ENCODE measurements at regions of chr16 and their contacts with region 1.

Region 1: DNA sequence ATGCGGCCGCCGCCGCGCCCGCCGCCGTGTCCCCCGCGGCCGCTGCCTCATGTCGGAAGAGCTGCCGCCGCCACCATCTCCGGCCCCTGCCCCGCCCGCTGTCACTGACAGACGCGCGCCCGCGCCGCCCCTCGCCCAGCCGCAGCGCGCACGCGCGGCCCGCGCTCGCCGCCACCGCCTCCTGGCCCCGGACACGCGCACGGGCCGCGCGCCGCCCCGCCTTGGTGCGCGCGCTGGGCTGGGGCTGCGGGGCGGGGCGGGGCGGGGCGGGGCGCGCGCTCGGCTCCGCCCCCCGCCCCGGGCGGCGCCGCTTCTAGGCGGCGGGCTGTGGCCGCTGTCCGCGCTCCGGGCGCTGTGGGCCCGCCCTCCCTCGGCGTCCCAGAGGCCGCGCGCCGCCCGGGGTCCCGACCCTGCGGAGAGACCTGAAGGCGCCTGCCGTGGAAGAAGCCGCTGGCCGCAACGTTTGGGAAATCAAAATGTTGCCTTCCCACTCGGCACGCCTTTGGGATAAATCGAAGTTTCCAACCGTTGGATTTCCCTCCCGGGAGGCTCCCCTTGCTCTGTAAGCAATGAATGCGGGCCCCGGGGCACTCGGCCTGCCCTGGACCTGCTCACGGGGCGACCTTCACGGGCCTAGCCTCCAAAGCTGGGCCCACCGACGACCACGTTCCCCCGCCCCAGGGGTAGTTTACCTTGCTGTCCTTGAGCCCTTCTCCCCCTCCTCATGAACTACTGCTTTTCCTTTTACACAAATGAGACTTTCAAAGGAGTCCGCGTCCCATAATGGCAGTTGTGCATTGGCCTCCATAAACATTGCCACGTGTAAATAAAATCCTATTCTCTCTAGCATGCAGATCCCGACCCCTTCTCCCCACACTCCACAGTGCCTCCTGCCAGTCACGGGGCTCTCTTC is at the start of gene ADCY9:
- DNase-seq: peak; percentile 77
- H3K4me3 ChIP-seq: peak within 1 kb of the TSS; percentile 66
- H3K27ac ChIP-seq: no peak within 1 kb of the TSS
- H3K4me1 ChIP-seq: peaks cover 7% of the 10 kb centered on the region
- CTCF ChIP-seq: no peak
- total RNA-seq, gene ADCY9: 0.08 and 0.22 TPM in 2 replicates

Region 2: GRCh38 chr16:4046221-4046620 is 70.4 kb before region 1 on chr16:
- CTCF ChIA-PET with region 1: no interaction called
- POLR2A ChIA-PET with region 1: interaction called, 12 read pairs
- intact Hi-C with region 1: no loop called
- DNase-seq: no peak
- H3K4me3 ChIP-seq: no peak overlapping the region
- H3K27ac ChIP-seq: no peak overlapping the region
- H3K4me1 ChIP-seq: no peaks in the 10 kb centered on the region
- CTCF ChIP-seq: no peak

Region 3: GRCh38 chr16:4160658-4161430 is 44.3 kb after region 1 on chr16:
- CTCF ChIA-PET with region 1: no interaction called
- POLR2A ChIA-PET with region 1: no interaction called
- intact Hi-C with region 1: no loop called
- DNase-seq: no peak
- H3K4me3 ChIP-seq: no peak overlapping the region
- H3K27ac ChIP-seq: no peak overlapping the region
- H3K4me1 ChIP-seq: no peaks in the 10 kb centered on the region
- CTCF ChIP-seq: no peak

Region 4: DNA sequence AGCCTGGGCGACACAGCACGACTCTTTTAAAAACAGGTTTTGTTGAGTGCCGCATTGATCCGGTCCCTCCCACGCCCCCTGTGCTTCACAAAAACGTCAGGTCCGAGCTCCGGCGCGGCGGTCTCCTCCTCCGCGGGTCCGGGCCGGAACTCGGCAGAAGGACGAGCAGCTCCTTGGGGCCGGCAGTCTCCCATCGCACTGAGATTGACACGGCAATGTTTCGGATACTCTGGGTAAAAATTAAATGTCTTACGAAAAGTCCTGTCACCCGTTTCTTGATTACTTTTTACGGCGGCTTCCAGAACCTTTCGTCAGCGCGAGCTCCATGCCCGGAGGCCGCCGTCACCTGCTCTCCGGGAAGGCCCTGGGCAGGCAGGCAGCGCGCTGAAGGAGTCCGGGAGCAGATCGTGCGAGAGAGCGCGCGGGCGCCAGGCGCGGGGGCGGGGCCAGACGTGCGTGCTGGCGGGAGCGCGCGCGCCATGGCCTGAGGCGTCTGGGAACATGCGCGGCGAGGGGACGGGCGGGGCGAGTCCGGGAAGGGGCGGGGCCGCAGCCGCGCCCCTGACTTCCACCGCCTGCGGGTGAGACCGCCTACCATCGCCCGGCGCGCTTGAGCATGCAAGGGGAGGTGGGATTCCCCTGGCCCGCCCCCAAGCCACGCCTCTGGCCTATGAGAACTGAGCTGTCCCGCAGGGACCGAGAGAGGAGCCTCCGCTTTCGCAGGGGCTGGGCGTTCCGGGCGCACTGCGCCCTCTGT is 137.0 kb after region 1 on chr16:
- CTCF ChIA-PET with region 1: no interaction called
- POLR2A ChIA-PET with region 1: no interaction called
- intact Hi-C with region 1: loop called (anchors 5 kb)
- DNase-seq: peak; percentile 100
- H3K4me3 ChIP-seq: peak overlapping the region; percentile 71
- H3K27ac ChIP-seq: peak overlapping the region; percentile 19
- H3K4me1 ChIP-seq: peaks cover 15% of the 10 kb centered on the region
- CTCF ChIP-seq: no peak